SK-N-SH (cell line): ENCODE measurements at regions of chr16 and their contacts with region 1.

Region 1: DNA sequence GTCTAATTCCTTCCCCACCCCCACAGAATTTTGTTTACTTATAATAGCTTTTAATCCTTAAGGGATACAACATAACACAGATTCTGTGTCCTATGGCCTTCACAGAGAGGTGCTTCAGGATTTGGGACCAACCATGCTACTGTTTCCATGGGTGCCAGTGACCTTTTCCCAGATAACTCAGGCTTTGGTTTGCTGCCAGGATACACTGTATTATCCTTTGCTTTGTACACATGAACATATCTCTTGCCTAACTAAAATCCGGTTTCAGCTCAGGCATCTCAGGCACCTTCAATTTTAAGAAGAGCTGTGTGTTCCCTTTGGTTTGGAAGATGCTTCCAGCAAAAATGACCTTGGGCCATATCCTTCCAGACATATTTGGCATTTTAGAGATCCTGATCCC is 428.4 kb upstream of the CDH5 start:
- DNase-seq: no peak
- H3K4me3 ChIP-seq: no peak overlapping the region
- H3K27ac ChIP-seq: no peak overlapping the region
- H3K4me1 ChIP-seq: peaks cover 0 to 2% of the 10 kb centered on the region in 2 experiments; a peak in 1 of 4 replicates
- H3K27me3 ChIP-seq: no peaks in the 10 kb centered on the region
- CTCF ChIP-seq: no peak
- EP300 ChIP-seq: no peak
- RAD21 ChIP-seq: no peak

Region 2: DNA sequence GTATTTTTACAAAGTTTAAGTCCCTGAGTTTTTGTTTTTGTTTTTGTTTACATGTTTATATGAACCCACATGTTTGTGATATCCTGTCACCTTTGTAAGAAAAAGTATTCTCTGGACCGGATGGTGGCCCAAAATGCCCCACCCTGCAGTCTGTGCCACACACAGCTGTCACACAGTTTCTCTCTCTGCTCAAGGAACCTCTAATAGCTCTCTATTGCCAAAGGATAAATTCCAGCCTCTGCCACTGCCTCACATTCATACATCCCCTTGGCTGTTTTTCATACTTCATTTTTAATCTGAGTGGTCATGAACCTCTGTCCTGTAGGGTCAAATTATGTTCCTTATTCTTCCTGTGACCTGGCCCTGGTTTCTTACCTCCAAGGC is 91.9 kb before region 1 on chr16:
- CTCF ChIA-PET with region 1: no interaction called
- POLR2A ChIA-PET with region 1: no interaction called
- DNase-seq: no peak
- H3K4me3 ChIP-seq: no peak overlapping the region
- H3K27ac ChIP-seq: no peak overlapping the region
- H3K4me1 ChIP-seq: no peaks in the 10 kb centered on the region
- H3K27me3 ChIP-seq: no peaks in the 10 kb centered on the region
- CTCF ChIP-seq: no peak
- EP300 ChIP-seq: no peak
- RAD21 ChIP-seq: no peak

Region 3: DNA sequence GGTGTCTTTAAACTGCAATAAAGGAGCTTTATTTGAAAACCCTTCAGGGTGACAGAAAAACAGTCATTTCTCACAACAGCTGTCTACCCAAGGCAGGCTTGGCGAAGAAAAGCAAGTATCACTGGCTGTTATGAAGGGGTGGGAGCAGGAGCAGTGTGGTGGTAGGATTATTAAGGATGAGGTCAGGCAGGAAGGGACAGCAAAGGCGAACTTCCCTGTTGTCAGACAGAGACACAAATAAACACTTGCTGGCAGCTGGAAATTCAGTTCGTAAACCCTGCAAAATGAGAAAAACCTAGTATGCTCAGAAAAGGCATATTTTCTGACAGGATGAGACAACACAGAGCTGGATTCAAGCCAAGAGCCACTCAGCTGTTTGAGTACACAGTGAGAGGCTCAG is 12.1 kb after region 1 on chr16:
- CTCF ChIA-PET with region 1: interaction called, 11 read pairs
- POLR2A ChIA-PET with region 1: no interaction called
- DNase-seq: no peak
- H3K4me3 ChIP-seq: no peak overlapping the region
- H3K27ac ChIP-seq: no peak overlapping the region
- H3K4me1 ChIP-seq: peaks cover 0 to 10% of the 10 kb centered on the region in 2 experiments; a peak in 1 of 4 replicates
- H3K27me3 ChIP-seq: no peaks in the 10 kb centered on the region
- CTCF ChIP-seq: no peak
- EP300 ChIP-seq: no peak
- RAD21 ChIP-seq: no peak